GM23248 (cell line): ENCODE measurements at regions of chr16 and their contacts with region 1.

Region 1: GRCh38 chr16:24580665-24581064 is 41.3 kb downstream of the RBBP6 start:
- DNase-seq: peak; percentile 67
- H3K4me3 ChIP-seq: no peak overlapping the region
- H3K27ac ChIP-seq: no peak overlapping the region
- H3K4me1 ChIP-seq: peaks cover 12% of the 10 kb centered on the region; the same call in 1 of the 2 replicates
- H3K27me3 ChIP-seq: no peaks in the 10 kb centered on the region

Region 2: DNA sequence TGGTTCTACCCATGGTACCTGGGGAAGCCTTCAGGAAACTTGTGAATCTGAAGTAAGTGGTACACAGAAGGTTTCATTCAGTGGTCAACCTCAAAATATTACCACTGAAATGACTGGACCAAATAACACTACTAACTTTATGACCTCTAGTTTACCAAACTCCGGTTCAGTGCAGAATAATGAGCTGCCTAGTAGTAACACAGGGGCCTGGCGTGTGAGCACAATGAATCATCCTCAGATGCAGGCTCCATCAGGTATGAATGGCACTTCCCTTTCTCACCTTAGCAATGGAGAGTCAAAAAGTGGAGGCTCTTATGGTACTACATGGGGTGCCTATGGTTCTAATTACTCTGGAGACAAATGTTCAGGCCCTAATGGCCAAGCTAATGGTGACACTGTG is 209.2 kb after region 1 on chr16:
- in situ Hi-C with region 1: loop called (anchors 10 kb)
- DNase-seq: no peak
- H3K4me3 ChIP-seq: no peak overlapping the region
- H3K27ac ChIP-seq: no peak overlapping the region
- H3K4me1 ChIP-seq: no peaks in the 10 kb centered on the region
- H3K27me3 ChIP-seq: no peaks in the 10 kb centered on the region

Region 3: DNA sequence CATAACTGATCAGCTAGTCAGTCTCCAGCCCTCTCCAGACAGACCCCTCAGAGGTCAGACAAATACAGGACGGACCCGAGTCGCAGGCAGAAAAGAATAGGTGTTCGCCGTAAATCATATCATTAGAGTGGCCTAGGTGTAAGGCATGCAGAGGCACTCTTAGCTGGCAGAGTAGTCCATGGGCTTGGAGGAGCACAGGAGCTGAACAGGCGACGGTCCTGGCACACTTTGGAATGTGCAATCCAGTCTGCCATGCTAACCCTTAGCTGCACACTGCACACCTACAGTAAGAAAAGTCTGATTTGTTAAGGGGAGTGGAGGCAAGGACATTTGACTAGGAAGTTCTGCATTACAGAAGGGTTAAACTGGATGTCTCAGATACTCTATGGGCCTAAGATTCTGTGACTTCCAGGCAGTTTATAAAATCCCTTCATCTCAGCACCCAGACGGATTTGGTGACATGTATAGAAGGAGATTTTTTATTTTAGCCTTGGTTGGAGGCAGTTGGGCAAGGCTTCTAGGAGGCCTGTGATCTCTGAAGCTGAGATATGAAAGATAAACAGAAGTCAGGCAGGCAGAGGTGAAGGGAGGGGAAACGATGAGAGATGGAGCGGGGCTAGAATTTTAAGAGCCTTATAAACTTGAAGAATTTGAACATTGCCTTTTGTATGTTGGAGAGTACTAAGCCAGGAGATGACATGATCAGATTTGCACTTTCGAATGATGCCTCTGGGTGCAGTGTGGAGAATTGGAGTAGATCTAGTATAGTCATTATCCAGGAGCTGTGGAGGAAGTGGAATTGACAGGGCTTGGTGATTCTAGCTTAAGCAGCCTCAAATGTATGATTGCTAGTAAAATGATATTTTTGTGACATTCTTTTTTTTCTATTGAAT is 230.5 kb after region 1 on chr16:
- in situ Hi-C with region 1: loop called (anchors 10 kb)
- DNase-seq: peak; percentile 7
- H3K4me3 ChIP-seq: no peak overlapping the region
- H3K27ac ChIP-seq: no peak overlapping the region
- H3K4me1 ChIP-seq: no peaks in the 10 kb centered on the region
- H3K27me3 ChIP-seq: no peaks in the 10 kb centered on the region